ENCODE measurements at regions of chr14 and their contacts with region 1.

Region 1: GRCh38 chr14:77593501-77593961 is 22.9 kb downstream of the SPTLC2 start:
- DNase-seq: peak; percentile 83
- ATAC-seq: peak; percentile 77
- H3K4me3 ChIP-seq: peak overlapping the region; percentile 22 to 77 (median 41)
- H3K4me3 Mint-ChIP-seq: peak overlapping the region; percentile 86
- H3K27ac ChIP-seq: peak overlapping the region; percentile 91 to 95
- H3K27ac Mint-ChIP-seq: peak overlapping the region; percentile 95
- H3K4me1 ChIP-seq: peaks cover 86 to 87% of the 10 kb centered on the region in 2 donors
- H3K4me1 Mint-ChIP-seq: peaks cover 78% of the 10 kb centered on the region
- H3K27me3 ChIP-seq: no peaks in the 10 kb centered on the region
- H3K27me3 Mint-ChIP-seq: no peaks in the 10 kb centered on the region
- CTCF ChIP-seq: no peak

Region 2: GRCh38 chr14:77320238-77320935 is 273.1 kb before region 1 on chr14 and contains the start of gene POMT2:
- CTCF ChIA-PET with region 1: no interaction called
- POLR2A ChIA-PET with region 1: no interaction called
- intact Hi-C with region 1: loop called (anchors 1 kb)
- DNase-seq: peak; percentile 96
- ATAC-seq: peak; percentile 56
- H3K4me3 ChIP-seq: peak within 1 kb of the TSS; percentile 59 to 99 (median 93)
- H3K4me3 Mint-ChIP-seq: peak within 1 kb of the TSS; percentile 100
- H3K27ac ChIP-seq: peak within 1 kb of the TSS; percentile 89 to 92
- H3K27ac Mint-ChIP-seq: peak within 1 kb of the TSS; percentile 100
- H3K4me1 ChIP-seq: peaks cover 10 to 16% of the 10 kb centered on the region in 2 donors
- H3K4me1 Mint-ChIP-seq: peaks cover 18% of the 10 kb centered on the region
- H3K27me3 ChIP-seq: no peaks in the 10 kb centered on the region
- H3K27me3 Mint-ChIP-seq: no peaks in the 10 kb centered on the region
- CTCF ChIP-seq: peak; percentile 43
- total RNA-seq, gene POMT2: 36.6 and 44.1 TPM in 2 replicates

Region 3: DNA sequence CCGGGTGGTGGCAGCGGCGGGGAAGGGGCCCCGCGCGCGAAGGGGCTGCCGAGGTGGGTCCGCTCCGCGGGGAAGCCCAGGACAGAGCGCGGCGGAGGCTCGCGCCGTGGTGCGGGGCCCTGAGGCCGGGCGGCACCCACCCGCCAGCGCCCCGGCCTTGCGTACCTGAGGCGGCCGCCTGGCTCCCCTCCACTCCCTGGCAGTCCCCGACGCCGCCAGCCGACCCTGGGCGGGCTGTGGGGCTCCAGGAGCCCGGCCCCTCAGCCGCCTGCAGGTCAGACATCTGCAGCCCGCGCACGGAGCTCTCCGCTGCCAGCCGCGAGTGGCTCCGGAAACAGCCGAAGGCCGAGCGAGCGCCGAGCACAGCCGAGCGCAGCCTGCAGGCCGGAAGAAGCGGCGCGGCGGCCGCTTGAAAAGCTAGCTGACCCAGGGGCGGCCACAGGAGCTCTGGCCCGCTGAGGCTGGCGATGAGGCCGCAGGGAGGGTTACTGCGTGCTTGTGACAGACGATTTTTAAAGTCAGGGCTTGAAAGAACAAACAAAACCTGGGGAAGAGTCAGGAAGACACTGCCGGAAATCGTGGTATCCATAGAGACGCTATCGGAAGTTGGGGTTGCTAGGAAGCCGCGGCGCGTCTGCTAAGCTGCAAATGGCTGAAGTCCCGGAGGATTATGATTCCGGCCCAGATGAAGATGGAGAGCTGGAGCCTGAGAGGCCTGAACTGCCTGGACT is 216.6 kb before region 1 on chr14 and contains the starts of genes SAMD15 and TMED8:
- CTCF ChIA-PET with region 1: no interaction called
- POLR2A ChIA-PET with region 1: no interaction called
- intact Hi-C with region 1: loop called (anchors 5 kb)
- DNase-seq: peak; percentile 92
- ATAC-seq: peak; percentile 92
- H3K4me3 ChIP-seq: peak within 1 kb of the TSS; percentile 79 to 100 (median 93)
- H3K4me3 Mint-ChIP-seq: peak within 1 kb of the TSS; percentile 95
- H3K27ac ChIP-seq: peak within 1 kb of the TSS; percentile 18 to 85
- H3K27ac Mint-ChIP-seq: peak within 1 kb of the TSS; percentile 91
- H3K4me1 ChIP-seq: peaks cover 39 to 43% of the 10 kb centered on the region in 2 donors
- H3K4me1 Mint-ChIP-seq: peaks cover 40% of the 10 kb centered on the region
- H3K27me3 ChIP-seq: no peaks in the 10 kb centered on the region
- H3K27me3 Mint-ChIP-seq: no peaks in the 10 kb centered on the region
- CTCF ChIP-seq: peak; percentile 48
- total RNA-seq, gene SAMD15: 0.96 and 1.00 TPM in 2 replicates
- total RNA-seq, gene TMED8: 43.8 and 44.7 TPM in 2 replicates

Region 4: GRCh38 chr14:77470192-77470870 is 123.2 kb before region 1 on chr14:
- CTCF ChIA-PET with region 1: no interaction called
- POLR2A ChIA-PET with region 1: no interaction called
- intact Hi-C with region 1: no loop called
- DNase-seq: no peak
- ATAC-seq: no peak
- H3K4me3 ChIP-seq: no peak overlapping the region
- H3K4me3 Mint-ChIP-seq: no peak overlapping the region
- H3K27ac ChIP-seq: no peak overlapping the region
- H3K27ac Mint-ChIP-seq: no peak overlapping the region
- H3K4me1 ChIP-seq: no peaks in the 10 kb centered on the region
- H3K4me1 Mint-ChIP-seq: no peaks in the 10 kb centered on the region
- H3K27me3 ChIP-seq: no peaks in the 10 kb centered on the region
- H3K27me3 Mint-ChIP-seq: no peaks in the 10 kb centered on the region
- CTCF ChIP-seq: no peak

Region 5: GRCh38 chr14:77485256-77485655 is 108.3 kb before region 1 on chr14:
- CTCF ChIA-PET with region 1: no interaction called
- POLR2A ChIA-PET with region 1: interaction called, 10 read pairs
- intact Hi-C with region 1: no loop called
- DNase-seq: no peak
- ATAC-seq: no peak
- H3K4me3 ChIP-seq: no peak overlapping the region
- H3K4me3 Mint-ChIP-seq: no peak overlapping the region
- H3K27ac ChIP-seq: no peak overlapping the region
- H3K27ac Mint-ChIP-seq: no peak overlapping the region
- H3K4me1 ChIP-seq: no peaks in the 10 kb centered on the region
- H3K4me1 Mint-ChIP-seq: no peaks in the 10 kb centered on the region
- H3K27me3 ChIP-seq: no peaks in the 10 kb centered on the region
- H3K27me3 Mint-ChIP-seq: no peaks in the 10 kb centered on the region
- CTCF ChIP-seq: no peak

Region 6: GRCh38 chr14:77641534-77642341 is 48.2 kb after region 1 on chr14:
- CTCF ChIA-PET with region 1: interaction called, 3 read pairs
- POLR2A ChIA-PET with region 1: no interaction called
- intact Hi-C with region 1: loop called (anchors 10 kb)
- DNase-seq: peak; percentile 72
- ATAC-seq: peak; percentile 70
- H3K4me3 ChIP-seq: peak overlapping the region; percentile 41 to 87 (median 75)
- H3K4me3 Mint-ChIP-seq: peak overlapping the region; percentile 96
- H3K27ac ChIP-seq: peak overlapping the region; percentile 73 to 81
- H3K27ac Mint-ChIP-seq: peak overlapping the region; percentile 95
- H3K4me1 ChIP-seq: peaks cover 7 to 17% of the 10 kb centered on the region in 2 donors
- H3K4me1 Mint-ChIP-seq: peaks cover 16% of the 10 kb centered on the region
- H3K27me3 ChIP-seq: no peaks in the 10 kb centered on the region
- H3K27me3 Mint-ChIP-seq: no peaks in the 10 kb centered on the region
- CTCF ChIP-seq: no peak

Region 7: GRCh38 chr14:77707724-77708408 is 114.3 kb after region 1 on chr14 and contains the starts of genes ALKBH1 and SLIRP:
- CTCF ChIA-PET with region 1: no interaction called
- POLR2A ChIA-PET with region 1: no interaction called
- intact Hi-C with region 1: loop called (anchors 5 kb)
- DNase-seq: peak; percentile 91
- ATAC-seq: peak; percentile 97
- H3K4me3 ChIP-seq: peak within 1 kb of the TSS; percentile 82 to 98 (median 92)
- H3K4me3 Mint-ChIP-seq: peak within 1 kb of the TSS; percentile 94
- H3K27ac ChIP-seq: peak within 1 kb of the TSS in 1 of 2 donors; percentile 75
- H3K27ac Mint-ChIP-seq: peak within 1 kb of the TSS; percentile 91
- H3K4me1 ChIP-seq: peaks cover 22 to 32% of the 10 kb centered on the region in 2 donors
- H3K4me1 Mint-ChIP-seq: peaks cover 37% of the 10 kb centered on the region
- H3K27me3 ChIP-seq: no peaks in the 10 kb centered on the region
- H3K27me3 Mint-ChIP-seq: no peaks in the 10 kb centered on the region
- CTCF ChIP-seq: no peak
- total RNA-seq, gene ALKBH1: 19.0 and 21.8 TPM in 2 replicates
- total RNA-seq, gene SLIRP: 30.6 and 33.8 TPM in 2 replicates

Region 8: DNA sequence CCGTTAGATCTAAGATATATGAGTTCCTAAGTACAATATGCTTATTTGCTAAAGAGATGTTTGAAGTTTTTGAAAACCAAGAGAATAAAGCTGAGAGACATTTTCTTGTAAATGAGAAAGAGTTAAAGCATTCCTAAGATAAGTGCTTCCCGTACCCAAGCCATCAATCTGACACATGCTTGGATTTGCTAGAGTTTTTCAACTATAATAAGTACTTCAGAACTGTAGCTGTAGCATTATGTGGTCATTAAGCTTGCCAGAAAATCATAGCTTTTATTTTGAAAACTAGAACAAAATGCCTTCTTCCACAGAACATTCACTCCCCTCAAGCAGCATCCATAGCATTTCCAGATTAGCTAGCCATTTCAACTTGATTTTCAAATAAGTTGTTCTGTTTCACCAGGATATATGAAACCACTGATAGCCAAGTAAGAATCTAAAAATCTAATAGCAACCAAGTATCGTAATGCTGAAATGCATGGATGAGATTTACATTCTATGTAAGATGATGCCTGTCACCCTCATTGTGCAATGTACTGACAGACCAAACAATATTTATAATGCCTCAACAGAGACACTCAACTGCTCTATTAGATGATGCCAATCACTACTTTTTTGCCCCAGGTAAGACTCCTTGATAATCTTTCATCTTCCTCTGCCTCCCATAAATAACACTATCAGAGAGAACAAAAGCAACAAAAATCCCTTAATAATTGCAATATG is 159.4 kb after region 1 on chr14:
- CTCF ChIA-PET with region 1: no interaction called
- POLR2A ChIA-PET with region 1: no interaction called
- intact Hi-C with region 1: no loop called
- DNase-seq: no peak
- ATAC-seq: no peak
- H3K4me3 ChIP-seq: no peak overlapping the region
- H3K4me3 Mint-ChIP-seq: no peak overlapping the region
- H3K27ac ChIP-seq: no peak overlapping the region
- H3K27ac Mint-ChIP-seq: no peak overlapping the region
- H3K4me1 ChIP-seq: no peaks in the 10 kb centered on the region
- H3K4me1 Mint-ChIP-seq: peaks cover 17% of the 10 kb centered on the region
- H3K27me3 ChIP-seq: no peaks in the 10 kb centered on the region
- H3K27me3 Mint-ChIP-seq: no peaks in the 10 kb centered on the region
- CTCF ChIP-seq: no peak